Breast epithelium (tissue), 4 donors: ENCODE measurements at regions of chr7 and their contacts with region 1.

Region 1: DNA sequence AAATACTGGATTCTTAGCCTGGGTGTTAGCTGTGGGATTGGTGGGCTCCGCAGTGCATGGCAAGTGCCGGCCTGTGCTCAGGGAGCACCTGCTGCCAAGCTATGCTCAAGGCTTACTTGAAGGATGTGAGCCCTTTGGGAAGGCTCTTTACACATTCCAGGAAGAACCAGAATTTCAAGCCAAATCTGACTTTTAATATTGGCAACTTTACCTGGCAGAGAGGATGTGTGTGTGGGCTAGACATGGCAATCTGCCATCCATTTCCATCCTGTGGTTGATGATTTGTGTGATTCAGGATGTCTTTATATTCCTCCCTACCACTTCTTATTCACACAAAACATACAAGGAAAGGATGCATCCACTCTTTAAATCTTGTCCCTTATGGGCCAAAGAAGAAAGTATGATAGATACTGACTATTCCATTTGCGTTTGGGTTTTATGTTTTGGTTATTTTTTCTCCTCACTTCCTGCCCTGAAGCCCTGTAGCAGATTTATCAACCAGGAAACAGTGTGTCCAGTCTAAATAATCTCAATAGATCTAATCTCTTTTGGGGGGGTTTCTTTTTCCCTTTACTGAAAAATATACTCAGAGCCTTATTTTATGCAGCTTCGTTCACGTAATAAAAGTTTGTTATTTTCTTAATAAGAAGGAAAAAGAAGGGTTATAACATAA is 247.1 kb downstream of the COBL start:
- DNase-seq: peak in 1 of 2 donors; percentile 49
- H3K4me3 ChIP-seq: no peak overlapping the region
- H3K27ac ChIP-seq: peak overlapping the region; percentile 33 to 50
- H3K4me1 ChIP-seq: no peaks in the 10 kb centered on the region
- H3K27me3 ChIP-seq: no peaks in the 10 kb centered on the region
- CTCF ChIP-seq: no peak
- POLR2A ChIP-seq: no peak

Region 2: DNA sequence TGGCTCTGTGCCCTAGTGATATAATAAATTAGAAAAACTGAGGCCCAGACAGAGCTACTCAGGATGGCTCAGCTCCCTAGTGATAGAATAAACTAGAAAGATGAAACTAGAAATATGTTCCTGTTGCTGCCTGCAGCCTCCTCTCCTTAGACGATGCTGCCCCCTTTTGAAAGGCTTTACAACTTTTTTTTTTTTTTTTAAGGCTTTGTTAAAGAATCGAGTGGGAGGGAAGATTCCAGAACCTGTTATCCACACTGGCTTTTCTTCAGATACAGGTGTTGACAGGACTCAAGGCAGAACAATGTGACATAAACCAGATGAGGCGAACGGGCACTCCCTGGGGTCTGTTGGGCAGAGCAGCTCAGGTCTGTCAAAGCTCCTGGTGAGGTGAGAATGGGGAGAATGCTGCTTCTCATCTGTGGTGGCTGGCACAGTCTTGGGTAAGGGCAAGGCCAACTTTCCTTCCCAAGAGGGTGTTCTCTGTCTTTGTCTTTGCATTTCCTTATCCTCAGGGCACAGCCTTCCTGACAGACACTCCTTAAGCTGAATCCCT is 72.0 kb after region 1 on chr7:
- intact Hi-C with region 1: loop called (anchors 10 kb)
- DNase-seq: no peak
- H3K4me3 ChIP-seq: no peak overlapping the region
- H3K27ac ChIP-seq: peak overlapping the region; percentile 64 to 77
- H3K4me1 ChIP-seq: no peaks in the 10 kb centered on the region
- H3K27me3 ChIP-seq: no peaks in the 10 kb centered on the region
- CTCF ChIP-seq: peak in 2 of 3 donors; percentile 37 to 43
- POLR2A ChIP-seq: no peak

Region 3: GRCh38 chr7:52799817-52800216 is 1730.3 kb after region 1 on chr7:
- intact Hi-C with region 1: no loop called
- DNase-seq: no peak
- H3K4me3 ChIP-seq: no peak overlapping the region
- H3K27ac ChIP-seq: no peak overlapping the region
- H3K4me1 ChIP-seq: no peaks in the 10 kb centered on the region
- H3K27me3 ChIP-seq: no peaks in the 10 kb centered on the region
- CTCF ChIP-seq: no peak
- POLR2A ChIP-seq: no peak